ENCODE measurements at regions of chr11 and their contacts with region 1.

Region 1: GRCh38 chr11:29159552-29160465 is 857.0 kb downstream of the KCNA4 start:
- DNase-seq: no peak
- ATAC-seq: no peak

Region 2: GRCh38 chr11:29100968-29101367 is 58.8 kb before region 1 on chr11:
- intact Hi-C with region 1: loop called (anchors 10 kb)
- DNase-seq: no peak
- ATAC-seq: no peak

Measured in Right ventricle myocardium superior (tissue), 1 donor.